Activated B cell treated with CpG ODN at 0.5 μM for 24 hours (primary cell): ENCODE measurements at regions of chr10 and their contacts with region 1.

Region 1: GRCh38 chr10:43348511-43349312 is 22.7 kb upstream of the FXYD4 start:
- DNase-seq: peak; percentile 59
- ATAC-seq: peak; percentile 100
- H3K4me3 Mint-ChIP-seq: no peak overlapping the region
- H3K27ac Mint-ChIP-seq: no peak overlapping the region
- H3K4me1 Mint-ChIP-seq: peaks cover 8% of the 10 kb centered on the region
- H3K27me3 Mint-ChIP-seq: peaks cover 13% of the 10 kb centered on the region
- CTCF ChIP-seq: no peak

Region 2: DNA sequence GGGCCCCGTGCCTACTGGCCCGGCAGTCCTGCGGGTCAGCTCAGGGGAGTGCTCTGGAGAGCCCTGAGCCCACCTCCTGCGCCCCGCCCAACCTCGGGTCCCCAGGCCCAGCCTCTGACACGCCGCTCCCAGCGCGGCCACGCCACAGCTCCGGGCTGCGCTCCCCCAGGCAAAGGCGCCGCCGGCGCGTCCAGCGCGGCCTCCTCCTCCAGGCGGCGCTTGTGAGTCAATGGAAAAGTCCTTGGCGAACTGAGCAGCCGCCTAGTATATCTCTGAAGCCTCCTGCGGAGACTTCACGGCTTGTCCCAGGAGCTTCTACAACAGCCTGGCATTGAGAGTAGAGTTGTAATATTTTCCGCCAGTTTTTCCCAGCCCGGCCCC is 595.6 kb before region 1 on chr10:
- CTCF ChIA-PET with region 1: no interaction called
- POLR2A ChIA-PET with region 1: no interaction called
- intact Hi-C with region 1: loop called (anchors 10 kb)
- DNase-seq: peak; percentile 46
- ATAC-seq: peak; percentile 45
- H3K4me3 Mint-ChIP-seq: peak overlapping the region; percentile 83
- H3K27ac Mint-ChIP-seq: no peak overlapping the region
- H3K4me1 Mint-ChIP-seq: peaks cover 14% of the 10 kb centered on the region
- H3K27me3 Mint-ChIP-seq: peaks cover 56% of the 10 kb centered on the region
- CTCF ChIP-seq: no peak

Region 3: DNA sequence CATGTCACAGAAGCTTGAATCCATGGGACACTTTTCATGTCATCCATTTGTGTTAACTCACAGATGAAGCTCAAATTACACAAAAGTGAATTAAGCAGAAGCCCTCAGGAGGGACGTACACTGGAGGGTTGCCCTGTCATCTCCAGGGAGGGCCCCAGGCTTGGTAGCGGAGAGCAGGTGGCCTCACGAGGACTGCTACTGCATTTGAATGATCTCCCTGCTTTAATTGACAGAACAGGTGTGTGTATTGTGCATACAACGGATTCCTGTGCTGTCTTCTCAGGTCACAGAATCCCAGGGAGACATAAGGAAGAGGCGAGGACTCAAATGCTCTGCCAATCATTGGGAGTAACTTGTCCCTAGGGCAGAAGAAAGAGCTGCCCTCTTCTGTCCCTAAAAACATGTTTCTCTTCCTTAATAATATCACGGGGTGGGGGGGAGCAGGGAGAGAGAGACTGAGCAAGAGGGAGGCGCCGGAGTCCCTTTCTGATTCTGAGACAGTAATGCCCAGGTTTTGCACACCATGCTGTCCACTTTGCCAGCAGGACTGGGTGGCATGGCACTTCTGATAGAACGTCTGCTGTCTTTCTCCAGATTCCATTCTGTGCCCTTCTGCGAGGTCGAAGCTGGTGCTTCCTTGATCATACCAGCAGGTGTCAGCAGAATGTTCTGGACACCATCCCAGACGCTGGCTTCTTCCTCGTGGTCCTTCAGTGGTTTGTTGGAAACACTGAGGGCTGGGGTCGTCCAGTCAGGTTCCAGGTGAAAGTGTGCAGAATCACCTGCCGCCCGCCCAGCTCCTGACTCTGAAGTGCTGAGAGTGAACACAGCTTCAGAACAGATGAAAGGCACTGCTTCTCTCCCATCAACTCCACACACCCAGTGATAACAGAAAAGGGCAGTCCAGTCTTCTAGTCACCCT is 55.7 kb before region 1 on chr10:
- CTCF ChIA-PET with region 1: interaction called, 9 read pairs
- POLR2A ChIA-PET with region 1: no interaction called
- intact Hi-C with region 1: loop called (anchors 1 kb)
- DNase-seq: no peak
- ATAC-seq: peak; percentile 66
- H3K4me3 Mint-ChIP-seq: no peak overlapping the region
- H3K27ac Mint-ChIP-seq: no peak overlapping the region
- H3K4me1 Mint-ChIP-seq: peaks cover 6% of the 10 kb centered on the region
- H3K27me3 Mint-ChIP-seq: peaks cover 7% of the 10 kb centered on the region
- CTCF ChIP-seq: no peak

Region 4: GRCh38 chr10:43361986-43362839 is 13.5 kb after region 1 on chr10:
- CTCF ChIA-PET with region 1: interaction called, 3 read pairs
- POLR2A ChIA-PET with region 1: interaction called, 12 read pairs
- intact Hi-C with region 1: no loop called
- DNase-seq: peak; percentile 86
- ATAC-seq: peak; percentile 98
- H3K4me3 Mint-ChIP-seq: peak overlapping the region; percentile 97
- H3K27ac Mint-ChIP-seq: peak overlapping the region; percentile 93
- H3K4me1 Mint-ChIP-seq: peaks cover 23% of the 10 kb centered on the region
- H3K27me3 Mint-ChIP-seq: no peaks in the 10 kb centered on the region
- CTCF ChIP-seq: no peak